Caco-2 (cell line): ENCODE measurements at regions of chr17 and their contacts with region 1.

Region 1: DNA sequence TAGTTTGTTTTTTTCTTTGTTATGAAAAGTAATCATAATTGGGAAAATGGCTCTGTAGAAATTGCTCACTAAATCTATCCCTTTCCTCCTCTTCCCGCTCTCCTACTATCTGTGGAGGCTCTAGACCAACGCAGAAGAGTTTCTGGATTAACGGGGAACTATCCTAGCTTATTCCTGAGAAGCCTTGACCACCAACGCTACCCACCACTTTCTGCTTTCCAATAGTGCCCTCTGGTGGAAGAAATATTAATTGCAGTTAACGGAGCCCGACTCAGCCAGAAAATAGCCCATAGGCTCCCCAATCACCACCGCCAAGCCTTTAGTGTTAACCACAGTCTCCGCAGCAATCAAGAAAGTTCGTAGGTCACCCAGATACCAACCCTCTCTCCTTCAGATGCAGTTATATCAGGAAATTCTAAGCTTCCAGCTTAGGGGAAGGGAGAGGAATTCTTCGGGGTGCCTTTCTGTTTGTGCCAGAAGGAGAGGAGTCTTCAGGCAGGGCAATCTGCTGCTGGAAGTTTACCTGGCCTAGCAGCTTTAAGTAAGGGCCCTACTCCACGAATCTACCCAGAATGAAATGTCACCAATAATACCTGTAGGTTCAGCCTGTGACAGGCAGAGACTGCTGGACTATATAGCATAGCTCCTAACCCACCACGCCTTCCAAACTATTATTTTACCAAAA is 23.0 kb upstream of the NSRP1 start:
- DNase-seq: peak; percentile 54 to 86
- H3K4me3 ChIP-seq: no peak overlapping the region
- H3K4me3 Mint-ChIP-seq: no peak overlapping the region
- H3K27ac Mint-ChIP-seq: no peak overlapping the region
- H3K4me1 ChIP-seq: no peaks in the 10 kb centered on the region; the same call in 1 of the 2 replicates
- H3K4me1 Mint-ChIP-seq: peaks cover 5% of the 10 kb centered on the region
- H3K27me3 ChIP-seq: no peaks in the 10 kb centered on the region
- H3K27me3 Mint-ChIP-seq: peaks cover 22% of the 10 kb centered on the region
- CTCF ChIP-seq: peak; percentile 69 to 90

Region 2: DNA sequence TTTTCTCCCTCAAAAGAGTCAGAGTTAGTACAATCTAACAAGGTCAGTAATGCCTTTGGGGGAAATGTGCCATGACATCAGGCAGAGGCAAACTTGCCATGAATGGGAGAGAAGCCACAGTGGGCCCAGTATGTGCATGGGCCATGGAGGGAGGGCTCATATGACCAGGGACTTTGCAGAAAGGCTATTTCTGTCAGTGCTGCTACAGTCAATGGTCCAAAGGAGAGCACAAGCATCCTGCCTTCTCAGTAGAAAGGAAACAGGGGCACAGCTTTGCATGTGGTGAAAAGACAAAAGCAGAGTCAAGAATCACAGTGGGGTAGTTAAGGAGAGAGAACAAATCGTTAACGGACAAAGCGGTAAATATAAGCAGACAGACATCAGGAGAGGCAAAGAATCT is 459.7 kb before region 1 on chr17:
- CTCF ChIA-PET with region 1: interaction called, 12 read pairs
- POLR2A ChIA-PET with region 1: no interaction called
- intact Hi-C with region 1: loop called (anchors 10 kb)
- DNase-seq: no peak
- H3K4me3 ChIP-seq: no peak overlapping the region
- H3K4me3 Mint-ChIP-seq: no peak overlapping the region
- H3K27ac Mint-ChIP-seq: no peak overlapping the region
- H3K4me1 ChIP-seq: peaks cover 1% of the 10 kb centered on the region; the same call in 1 of the 2 replicates
- H3K4me1 Mint-ChIP-seq: no peaks in the 10 kb centered on the region
- H3K27me3 ChIP-seq: no peaks in the 10 kb centered on the region
- H3K27me3 Mint-ChIP-seq: no peaks in the 10 kb centered on the region
- CTCF ChIP-seq: no peak

Region 3: DNA sequence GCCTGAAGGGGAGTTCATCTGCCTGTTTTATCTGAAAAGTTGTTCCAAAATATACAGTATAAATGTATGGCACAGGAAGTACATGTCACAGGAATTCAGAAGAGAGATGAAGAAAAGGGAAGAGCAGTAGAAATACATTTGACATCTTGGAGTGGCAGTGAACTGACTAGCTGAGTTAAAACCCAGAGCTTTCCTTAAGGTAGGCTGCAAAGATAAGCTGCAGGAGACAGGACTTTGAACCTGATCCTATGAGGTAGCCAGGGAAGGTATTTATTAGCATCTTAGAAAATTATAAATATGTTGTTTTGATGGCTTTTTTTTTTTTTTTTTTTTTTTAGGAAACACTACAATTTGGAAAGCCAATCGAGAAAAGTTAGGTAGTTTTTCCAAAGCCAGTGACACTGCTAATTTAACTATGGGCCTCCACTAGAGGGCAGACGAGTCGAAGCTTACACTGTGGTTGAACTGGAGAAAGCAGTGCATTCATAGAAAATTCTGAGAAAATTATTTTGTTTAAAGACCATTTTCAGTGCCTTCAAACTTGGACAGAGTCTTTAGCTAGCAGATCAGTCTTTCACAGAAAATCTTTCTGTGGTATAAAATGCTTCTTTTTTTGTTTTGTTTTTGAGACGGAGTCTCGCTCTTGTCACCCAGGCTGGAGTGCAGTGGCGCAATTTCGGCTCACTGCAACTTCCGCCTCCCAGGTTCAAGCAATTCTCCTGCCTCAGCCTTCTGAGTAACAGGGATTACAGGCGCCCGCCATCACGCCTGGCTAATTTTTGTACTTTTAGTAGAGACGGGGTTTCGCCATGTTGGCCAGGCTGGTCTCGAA is 285.9 kb before region 1 on chr17:
- CTCF ChIA-PET with region 1: interaction called, 14 read pairs
- POLR2A ChIA-PET with region 1: no interaction called
- intact Hi-C with region 1: loop called (anchors 2 kb)
- DNase-seq: peak; percentile 70 to 80
- H3K4me3 ChIP-seq: no peak overlapping the region
- H3K4me3 Mint-ChIP-seq: no peak overlapping the region
- H3K27ac Mint-ChIP-seq: no peak overlapping the region
- H3K4me1 ChIP-seq: no peaks in the 10 kb centered on the region
- H3K4me1 Mint-ChIP-seq: no peaks in the 10 kb centered on the region
- H3K27me3 ChIP-seq: no peaks in the 10 kb centered on the region
- H3K27me3 Mint-ChIP-seq: no peaks in the 10 kb centered on the region
- CTCF ChIP-seq: peak; percentile 85 to 87

Region 4: GRCh38 chr17:29931231-29931932 is 162.2 kb before region 1 on chr17:
- CTCF ChIA-PET with region 1: interaction called, 51 read pairs
- POLR2A ChIA-PET with region 1: no interaction called
- intact Hi-C with region 1: loop called (anchors 1 kb)
- DNase-seq: peak; percentile 76 to 78
- H3K4me3 ChIP-seq: peak overlapping the region; percentile 91
- H3K4me3 Mint-ChIP-seq: no peak overlapping the region
- H3K27ac Mint-ChIP-seq: no peak overlapping the region
- H3K4me1 ChIP-seq: peaks cover 13% of the 10 kb centered on the region
- H3K4me1 Mint-ChIP-seq: peaks cover 12% of the 10 kb centered on the region
- H3K27me3 ChIP-seq: no peaks in the 10 kb centered on the region
- H3K27me3 Mint-ChIP-seq: peaks cover 2% of the 10 kb centered on the region
- CTCF ChIP-seq: peak; percentile 86 to 95

Region 5: DNA sequence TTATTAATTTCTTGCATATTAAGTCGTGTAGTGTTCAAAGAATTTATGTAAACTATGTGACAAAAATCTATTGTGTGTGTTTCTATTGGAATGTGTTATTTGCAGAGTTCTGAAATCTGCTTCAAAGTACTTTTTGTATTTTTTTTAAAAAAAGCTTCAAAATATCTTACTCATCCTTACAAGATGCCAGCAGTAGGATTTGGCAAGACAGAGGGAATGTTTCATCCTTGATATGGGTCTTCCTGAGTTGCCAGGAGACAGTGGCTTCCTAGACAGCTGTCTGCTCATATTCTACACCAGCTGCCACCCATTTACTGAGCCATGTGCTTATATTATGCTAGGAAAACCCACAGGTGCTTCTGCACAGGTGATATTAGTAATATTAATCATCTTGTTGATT is 115.8 kb before region 1 on chr17:
- CTCF ChIA-PET with region 1: no interaction called
- POLR2A ChIA-PET with region 1: no interaction called
- intact Hi-C with region 1: no loop called
- DNase-seq: no peak
- H3K4me3 ChIP-seq: no peak overlapping the region
- H3K4me3 Mint-ChIP-seq: no peak overlapping the region
- H3K27ac Mint-ChIP-seq: no peak overlapping the region
- H3K4me1 ChIP-seq: no peaks in the 10 kb centered on the region
- H3K4me1 Mint-ChIP-seq: no peaks in the 10 kb centered on the region
- H3K27me3 ChIP-seq: no peaks in the 10 kb centered on the region
- H3K27me3 Mint-ChIP-seq: no peaks in the 10 kb centered on the region
- CTCF ChIP-seq: no peak

Region 6: DNA sequence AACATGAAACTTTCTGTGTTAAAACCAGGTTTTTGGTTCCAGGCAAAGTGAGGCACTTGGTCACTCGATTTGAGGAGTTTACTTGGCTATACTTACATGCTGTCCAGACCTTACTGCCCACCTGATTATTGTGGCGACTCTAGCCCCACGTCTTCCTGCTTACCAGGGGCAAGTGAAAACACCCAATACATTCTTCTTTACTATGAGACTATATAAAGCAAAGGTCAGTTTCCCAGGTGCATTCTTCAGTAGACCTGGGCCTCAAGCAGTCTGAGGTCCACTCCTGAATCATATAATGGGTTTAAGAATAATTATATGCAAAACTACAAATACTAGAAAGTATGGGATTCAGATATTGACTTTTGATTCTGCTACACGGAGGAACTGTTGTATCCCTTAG is 65.9 kb before region 1 on chr17:
- CTCF ChIA-PET with region 1: interaction called, 11 read pairs
- POLR2A ChIA-PET with region 1: no interaction called
- intact Hi-C with region 1: loop called (anchors 1 kb)
- DNase-seq: no peak
- H3K4me3 ChIP-seq: no peak overlapping the region
- H3K4me3 Mint-ChIP-seq: no peak overlapping the region
- H3K27ac Mint-ChIP-seq: no peak overlapping the region
- H3K4me1 ChIP-seq: peaks cover 5% of the 10 kb centered on the region; the same call in 1 of the 2 replicates
- H3K4me1 Mint-ChIP-seq: no peaks in the 10 kb centered on the region
- H3K27me3 ChIP-seq: no peaks in the 10 kb centered on the region
- H3K27me3 Mint-ChIP-seq: peaks cover 3% of the 10 kb centered on the region
- CTCF ChIP-seq: no peak

Region 7: GRCh38 chr17:30113213-30113612 is 19.6 kb after region 1 on chr17:
- CTCF ChIA-PET with region 1: no interaction called
- POLR2A ChIA-PET with region 1: no interaction called
- intact Hi-C with region 1: no loop called
- DNase-seq: no peak
- H3K4me3 ChIP-seq: no peak overlapping the region
- H3K4me3 Mint-ChIP-seq: no peak overlapping the region
- H3K27ac Mint-ChIP-seq: no peak overlapping the region
- H3K4me1 ChIP-seq: peaks cover 6% of the 10 kb centered on the region
- H3K4me1 Mint-ChIP-seq: peaks cover 11% of the 10 kb centered on the region
- H3K27me3 ChIP-seq: no peaks in the 10 kb centered on the region
- H3K27me3 Mint-ChIP-seq: no peaks in the 10 kb centered on the region
- CTCF ChIP-seq: no peak